ENCODE measurements at regions of chr19 and their contacts with region 1.

Region 1: GRCh38 chr19:33430674-33431277 is 57.3 kb downstream of the CEBPG start:
- DNase-seq: peak; percentile 20 to 76 (median 61)
- ATAC-seq: peak; percentile 74
- H3K4me3 ChIP-seq: no peak overlapping the region
- H3K4me3 Mint-ChIP-seq: peak overlapping the region; percentile 68
- H3K27ac ChIP-seq: peak overlapping the region in 1 of 2 experiments; percentile 29
- H3K27ac Mint-ChIP-seq: peak overlapping the region; percentile 89
- H3K4me1 ChIP-seq: peaks cover 6% of the 10 kb centered on the region
- H3K4me1 Mint-ChIP-seq: peaks cover 12% of the 10 kb centered on the region
- H3K27me3 ChIP-seq: no peaks in the 10 kb centered on the region
- H3K27me3 Mint-ChIP-seq: no peaks in the 10 kb centered on the region
- CTCF ChIP-seq: peak; percentile 69

Region 2: GRCh38 chr19:33110137-33110910 is 320.5 kb before region 1 on chr19:
- CTCF ChIA-PET with region 1: no interaction called
- POLR2A ChIA-PET with region 1: no interaction called
- intact Hi-C with region 1: no loop called
- DNase-seq: no peak
- ATAC-seq: no peak
- H3K4me3 ChIP-seq: no peak overlapping the region
- H3K4me3 Mint-ChIP-seq: no peak overlapping the region
- H3K27ac ChIP-seq: no peak overlapping the region
- H3K27ac Mint-ChIP-seq: no peak overlapping the region
- H3K4me1 ChIP-seq: no peaks in the 10 kb centered on the region
- H3K4me1 Mint-ChIP-seq: no peaks in the 10 kb centered on the region
- H3K27me3 ChIP-seq: no peaks in the 10 kb centered on the region
- H3K27me3 Mint-ChIP-seq: no peaks in the 10 kb centered on the region
- CTCF ChIP-seq: no peak

Region 3: GRCh38 chr19:33416307-33417215 is 14.2 kb before region 1 on chr19:
- CTCF ChIA-PET with region 1: interaction called, 11 read pairs
- POLR2A ChIA-PET with region 1: no interaction called
- intact Hi-C with region 1: no loop called
- DNase-seq: peak; percentile 37 to 78 (median 71)
- ATAC-seq: peak; percentile 92
- H3K4me3 ChIP-seq: peak overlapping the region; percentile 37 to 45
- H3K4me3 Mint-ChIP-seq: peak overlapping the region; percentile 74
- H3K27ac ChIP-seq: no peak overlapping the region
- H3K27ac Mint-ChIP-seq: no peak overlapping the region
- H3K4me1 ChIP-seq: peaks cover 5% of the 10 kb centered on the region
- H3K4me1 Mint-ChIP-seq: peaks cover 8% of the 10 kb centered on the region
- H3K27me3 ChIP-seq: no peaks in the 10 kb centered on the region
- H3K27me3 Mint-ChIP-seq: no peaks in the 10 kb centered on the region
- CTCF ChIP-seq: peak; percentile 60